AG04449 (cell line): ENCODE measurements at regions of chr2 and their contacts with region 1.

Region 1: GRCh38 chr2:20600756-20601325 is 50.1 kb downstream of the HS1BP3 start:
- DNase-seq: no peak
- H3K4me3 ChIP-seq: no peak overlapping the region
- CTCF ChIP-seq: no peak

Region 2: GRCh38 chr2:19600506-19600905 is 1000.3 kb before region 1 on chr2:
- CTCF ChIA-PET with region 1: no interaction called
- POLR2A ChIA-PET with region 1: no interaction called
- DNase-seq: no peak
- H3K4me3 ChIP-seq: no peak overlapping the region
- CTCF ChIP-seq: peak; percentile 13

Region 3: DNA sequence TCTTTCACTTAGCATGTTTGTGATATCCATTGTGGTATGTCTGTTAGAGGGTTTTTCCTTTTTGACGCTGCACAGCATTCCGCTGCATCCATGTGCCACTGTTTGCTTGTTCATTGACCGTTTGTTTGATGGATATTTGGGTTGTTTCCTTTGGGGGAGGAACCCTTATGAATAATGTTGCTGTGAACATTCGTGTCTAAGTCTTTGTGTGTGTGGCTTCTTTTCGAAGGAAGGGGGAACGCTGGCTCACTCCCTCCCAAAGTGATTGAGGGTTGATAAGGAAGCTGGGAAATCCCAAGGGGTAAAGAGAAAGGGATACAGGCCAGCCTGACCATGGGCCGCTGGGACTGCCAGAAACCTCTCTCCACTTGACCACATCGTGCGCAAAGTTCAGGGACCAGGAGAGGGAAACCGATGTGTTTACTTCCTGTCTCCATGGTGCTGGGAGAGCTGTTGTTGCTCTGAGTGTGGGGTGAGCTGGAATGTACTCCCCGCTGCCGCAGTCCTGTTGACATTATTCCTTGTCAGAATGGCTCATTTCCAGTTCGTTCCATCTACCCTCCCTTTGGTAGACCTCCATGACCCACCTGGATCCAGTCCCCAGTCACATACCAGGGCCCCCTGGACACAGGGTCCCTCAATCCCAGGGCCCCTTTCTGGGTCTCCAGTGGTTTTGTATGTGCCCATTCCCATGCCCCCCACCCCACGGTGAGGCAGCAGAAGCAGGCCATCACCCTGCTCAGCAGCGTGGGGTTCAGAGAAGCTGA is 10.4 kb after region 1 on chr2:
- CTCF ChIA-PET with region 1: interaction called, 18 read pairs
- POLR2A ChIA-PET with region 1: interaction called, 3 read pairs
- DNase-seq: no peak
- H3K4me3 ChIP-seq: no peak overlapping the region
- CTCF ChIP-seq: no peak